Right cardiac atrium (tissue), 5 donors: ENCODE measurements at regions of chr3 and their contacts with region 1.

Region 1: DNA sequence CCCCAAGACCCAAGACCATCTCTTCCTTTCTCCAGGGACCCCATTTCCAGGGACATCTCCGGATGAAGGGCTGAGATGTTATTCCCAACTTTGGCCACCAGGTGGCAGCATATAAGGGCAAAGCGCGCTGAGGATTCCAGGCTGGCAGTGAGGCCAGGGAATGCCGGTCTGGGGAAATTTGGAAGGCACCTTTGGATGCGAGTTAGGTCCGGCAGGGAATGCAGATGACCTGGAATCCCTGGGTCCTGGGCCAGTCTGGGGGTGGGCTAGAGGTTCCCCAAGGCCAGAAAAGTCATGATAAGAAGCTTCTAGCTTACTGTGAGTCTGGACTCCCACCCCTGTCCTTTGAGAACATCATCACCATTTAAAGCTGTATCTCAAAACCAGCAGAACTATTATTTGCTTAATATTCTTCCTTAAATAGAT is 1.6 kb upstream of the CHST13 start:
- DNase-seq: peak; percentile 40 to 79 (median 77)
- ATAC-seq: peak; percentile 6 to 25
- H3K4me3 ChIP-seq: no peak overlapping the region
- H3K27ac ChIP-seq: no peak overlapping the region
- H3K4me1 ChIP-seq: no peaks in the 10 kb centered on the region
- H3K27me3 ChIP-seq: no peaks in the 10 kb centered on the region

Region 2: DNA sequence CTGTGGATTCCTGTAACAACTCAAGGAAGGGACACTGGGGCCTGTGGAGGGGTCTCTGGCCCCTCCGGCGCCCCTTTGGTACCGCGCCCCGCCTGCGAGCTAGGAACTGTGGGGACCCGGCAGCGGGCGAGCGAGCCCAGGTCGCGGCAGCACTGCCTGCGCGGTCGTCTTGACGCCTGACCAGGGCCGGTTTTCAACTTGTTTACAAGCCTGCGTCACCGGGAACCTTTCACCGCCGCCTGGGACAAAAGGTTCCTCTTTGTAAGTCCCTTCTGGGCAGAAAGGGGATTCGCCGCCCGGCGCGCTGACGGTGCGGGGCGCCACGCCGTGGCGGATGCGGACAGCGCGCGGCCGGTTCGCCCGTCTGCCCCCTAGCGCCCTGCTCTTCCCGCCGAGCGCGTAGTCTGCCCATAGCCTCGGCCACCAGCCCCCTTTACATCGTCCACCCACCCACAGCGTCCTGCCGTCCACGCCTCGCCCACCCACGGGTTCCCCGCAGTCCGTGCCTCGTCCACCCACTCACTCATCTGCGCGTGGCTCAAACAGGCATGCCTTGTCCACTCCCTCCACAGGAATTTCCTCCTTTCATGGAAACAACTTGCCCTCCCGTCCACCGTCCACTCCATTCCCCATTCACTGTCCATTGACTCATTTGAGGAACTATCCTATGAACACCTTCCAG is 133.1 kb before region 1 on chr3:
- intact Hi-C with region 1: no loop called
- DNase-seq: peak; percentile 95 to 97 (median 95)
- ATAC-seq: peak; percentile 97
- H3K4me3 ChIP-seq: no peak overlapping the region
- H3K27ac ChIP-seq: peak overlapping the region; percentile 72
- H3K4me1 ChIP-seq: no peaks in the 10 kb centered on the region
- H3K27me3 ChIP-seq: no peaks in the 10 kb centered on the region

Region 3: DNA sequence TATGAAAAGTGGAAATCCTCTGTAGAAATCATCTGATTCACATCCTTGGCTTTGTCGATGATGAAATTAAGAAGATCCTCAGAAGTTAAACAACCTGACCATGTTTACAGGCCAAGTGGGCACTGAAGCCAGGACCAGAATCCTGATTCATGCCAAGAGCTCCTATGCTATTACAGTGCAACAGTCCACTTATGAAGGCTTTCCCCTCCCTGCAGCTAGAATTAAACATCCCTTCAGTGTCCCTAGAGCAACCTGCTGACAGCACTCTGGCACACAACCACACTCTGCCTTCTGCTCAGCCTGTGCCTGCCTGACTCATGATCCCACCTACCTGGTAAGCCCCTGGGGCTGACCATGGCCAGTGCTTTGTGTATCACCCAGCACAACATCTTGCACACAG is 98.8 kb after region 1 on chr3:
- intact Hi-C with region 1: loop called in 1 of 4 experiments (anchors 10 kb)
- DNase-seq: peak; percentile 40 to 70 (median 67)
- ATAC-seq: peak; percentile 94 to 96
- H3K4me3 ChIP-seq: no peak overlapping the region
- H3K27ac ChIP-seq: no peak overlapping the region
- H3K4me1 ChIP-seq: peaks cover 3% of the 10 kb centered on the region
- H3K27me3 ChIP-seq: no peaks in the 10 kb centered on the region

Region 4: GRCh38 chr3:127544192-127544802 is 1021.9 kb after region 1 on chr3:
- intact Hi-C with region 1: loop called in 2 of 4 experiments (anchors 10 kb)
- DNase-seq: peak; percentile 76 to 91 (median 84)
- ATAC-seq: peak; percentile 39 to 54
- H3K4me3 ChIP-seq: no peak overlapping the region
- H3K27ac ChIP-seq: no peak overlapping the region
- H3K4me1 ChIP-seq: no peaks in the 10 kb centered on the region
- H3K27me3 ChIP-seq: no peaks in the 10 kb centered on the region